MCF 10A (cell line): ENCODE measurements at regions of chr3 and their contacts with region 1.

Region 1: DNA sequence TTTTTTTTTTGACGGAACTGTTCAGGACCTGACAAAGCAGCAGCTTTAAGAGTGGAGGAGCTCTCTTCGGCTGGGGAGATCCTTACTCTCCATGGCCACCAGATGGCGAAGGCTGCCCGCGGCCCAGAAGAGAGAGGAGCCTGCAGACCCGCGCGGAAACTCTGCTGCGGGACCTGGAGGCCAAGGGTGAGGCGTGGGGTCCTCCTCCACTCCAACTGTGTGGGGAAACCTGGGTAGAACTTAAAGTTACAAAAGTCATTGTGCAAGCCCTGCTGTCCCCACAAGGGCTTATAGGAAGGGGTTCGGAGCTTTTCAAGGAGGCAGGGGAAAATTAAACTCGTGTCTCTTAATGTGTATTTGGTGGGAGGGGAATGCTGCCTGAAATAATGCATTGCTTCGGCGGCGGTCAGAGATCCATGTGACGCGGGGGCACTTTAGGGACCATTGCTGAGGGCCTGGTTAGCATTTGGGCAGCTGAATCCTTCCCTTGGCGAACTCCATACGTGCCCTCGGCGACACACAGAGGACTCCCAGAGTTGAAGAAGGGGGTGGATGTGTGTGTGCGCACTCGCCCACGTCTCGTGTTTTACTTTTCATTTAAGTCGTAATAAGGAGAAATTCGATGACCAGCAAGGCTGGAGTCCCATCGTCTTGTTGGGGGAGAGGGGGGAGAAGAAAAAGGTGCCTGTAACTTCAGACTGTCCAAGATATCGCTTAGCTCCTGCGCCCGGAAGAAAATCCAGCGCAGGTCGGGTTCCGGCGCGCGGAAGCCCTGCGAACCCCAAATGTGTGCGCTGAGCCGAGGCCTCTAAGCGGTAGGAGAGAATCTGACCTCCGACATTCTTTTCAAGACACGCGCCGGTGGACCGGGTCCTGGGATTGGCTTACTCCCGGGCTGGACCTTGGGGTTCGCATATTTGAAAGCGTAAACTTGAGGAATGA is 9.7 kb downstream of the EOMES start:
- DNase-seq: peak; percentile 83
- H3K4me3 Mint-ChIP-seq: peak overlapping the region; percentile 74
- H3K27ac Mint-ChIP-seq: peak overlapping the region; percentile 17
- H3K4me1 Mint-ChIP-seq: peaks cover 17% of the 10 kb centered on the region
- H3K27me3 Mint-ChIP-seq: no peaks in the 10 kb centered on the region
- CTCF ChIP-seq: peak; percentile 72

Region 2: GRCh38 chr3:27659279-27660021 is 53.0 kb before region 1 on chr3:
- CTCF ChIA-PET with region 1: no interaction called
- POLR2A ChIA-PET with region 1: no interaction called
- intact Hi-C with region 1: no loop called
- DNase-seq: peak; percentile 66
- H3K4me3 Mint-ChIP-seq: no peak overlapping the region
- H3K27ac Mint-ChIP-seq: no peak overlapping the region
- H3K4me1 Mint-ChIP-seq: peaks cover 5% of the 10 kb centered on the region
- H3K27me3 Mint-ChIP-seq: no peaks in the 10 kb centered on the region
- CTCF ChIP-seq: peak; percentile 82

Region 3: GRCh38 chr3:27728195-27729087 is 16.0 kb after region 1 on chr3:
- CTCF ChIA-PET with region 1: interaction called, 33 read pairs
- POLR2A ChIA-PET with region 1: no interaction called
- intact Hi-C with region 1: no loop called
- DNase-seq: no peak
- H3K4me3 Mint-ChIP-seq: peak overlapping the region; percentile 33
- H3K27ac Mint-ChIP-seq: no peak overlapping the region
- H3K4me1 Mint-ChIP-seq: no peaks in the 10 kb centered on the region
- H3K27me3 Mint-ChIP-seq: no peaks in the 10 kb centered on the region
- CTCF ChIP-seq: no peak

Region 4: DNA sequence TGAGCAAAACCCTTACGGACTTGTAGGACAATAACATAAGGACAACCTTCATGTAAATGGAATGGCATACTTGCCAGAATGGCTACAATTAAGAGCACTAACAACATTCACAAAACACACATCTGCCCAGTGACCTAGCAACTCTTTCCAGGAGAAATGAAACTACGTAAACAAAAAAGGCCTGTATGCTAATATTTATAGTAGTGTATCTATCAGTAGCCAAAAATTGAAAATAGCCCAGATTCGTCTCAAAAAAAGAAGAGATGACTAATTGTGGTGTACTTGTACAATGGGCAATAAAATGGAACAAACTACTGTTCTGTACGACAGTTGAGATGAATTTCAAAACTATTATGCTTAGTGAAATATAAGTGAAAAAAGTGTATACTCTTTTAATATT is 567.4 kb after region 1 on chr3:
- CTCF ChIA-PET with region 1: interaction called, 67 read pairs
- POLR2A ChIA-PET with region 1: no interaction called
- intact Hi-C with region 1: no loop called
- DNase-seq: no peak
- H3K4me3 Mint-ChIP-seq: no peak overlapping the region
- H3K27ac Mint-ChIP-seq: no peak overlapping the region
- H3K4me1 Mint-ChIP-seq: peaks cover 6% of the 10 kb centered on the region
- H3K27me3 Mint-ChIP-seq: no peaks in the 10 kb centered on the region
- CTCF ChIP-seq: no peak

Region 5: DNA sequence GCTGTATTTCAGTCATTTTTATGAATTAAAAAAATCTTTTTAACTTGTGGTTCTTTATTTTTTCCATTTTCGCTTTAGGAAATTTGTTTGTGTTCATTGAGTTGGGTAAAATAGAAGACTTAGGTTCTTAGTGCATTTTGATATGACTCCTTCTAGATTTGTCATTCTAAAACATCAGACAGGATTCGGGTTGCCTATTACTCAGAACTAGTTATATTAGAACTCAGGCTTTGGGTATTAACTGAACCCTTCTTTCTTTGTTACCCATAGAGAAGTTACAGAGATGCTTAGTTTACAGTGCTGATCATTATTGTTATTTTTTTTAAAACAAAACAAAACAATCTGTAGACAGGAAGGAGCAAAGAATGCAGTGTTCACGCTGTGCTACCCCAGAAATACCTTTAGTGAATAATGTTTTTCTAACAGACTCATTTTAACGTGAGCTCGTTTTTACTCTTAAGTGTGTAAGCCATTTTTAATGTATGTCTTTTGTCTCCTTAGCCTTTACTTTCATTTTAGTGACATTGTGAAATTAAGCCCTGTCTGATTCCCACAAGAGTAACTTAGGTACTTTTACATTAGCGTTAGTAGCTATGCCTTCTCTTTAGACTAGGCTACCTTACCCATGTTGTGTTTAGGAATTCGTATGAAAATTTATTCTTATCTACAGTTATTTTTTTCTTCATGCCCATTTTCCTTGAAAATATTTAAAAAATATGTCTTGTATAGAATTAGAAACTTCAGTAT is 582.4 kb after region 1 on chr3:
- CTCF ChIA-PET with region 1: interaction called, 19 read pairs
- POLR2A ChIA-PET with region 1: interaction called, 7 read pairs
- intact Hi-C with region 1: no loop called
- DNase-seq: no peak
- H3K4me3 Mint-ChIP-seq: no peak overlapping the region
- H3K27ac Mint-ChIP-seq: peak overlapping the region; percentile 17
- H3K4me1 Mint-ChIP-seq: no peaks in the 10 kb centered on the region
- H3K27me3 Mint-ChIP-seq: no peaks in the 10 kb centered on the region
- CTCF ChIP-seq: no peak

Region 6: GRCh38 chr3:28328188-28329151 is 616.1 kb after region 1 on chr3:
- CTCF ChIA-PET with region 1: interaction called, 52 read pairs
- POLR2A ChIA-PET with region 1: interaction called, 16 read pairs
- intact Hi-C with region 1: loop called (anchors 1 kb)
- DNase-seq: peak; percentile 35
- H3K4me3 Mint-ChIP-seq: no peak overlapping the region
- H3K27ac Mint-ChIP-seq: no peak overlapping the region
- H3K4me1 Mint-ChIP-seq: no peaks in the 10 kb centered on the region
- H3K27me3 Mint-ChIP-seq: no peaks in the 10 kb centered on the region
- CTCF ChIP-seq: peak; percentile 37